A673 (cell line): ENCODE measurements at regions of chr2 and their contacts with region 1.

Region 1: DNA sequence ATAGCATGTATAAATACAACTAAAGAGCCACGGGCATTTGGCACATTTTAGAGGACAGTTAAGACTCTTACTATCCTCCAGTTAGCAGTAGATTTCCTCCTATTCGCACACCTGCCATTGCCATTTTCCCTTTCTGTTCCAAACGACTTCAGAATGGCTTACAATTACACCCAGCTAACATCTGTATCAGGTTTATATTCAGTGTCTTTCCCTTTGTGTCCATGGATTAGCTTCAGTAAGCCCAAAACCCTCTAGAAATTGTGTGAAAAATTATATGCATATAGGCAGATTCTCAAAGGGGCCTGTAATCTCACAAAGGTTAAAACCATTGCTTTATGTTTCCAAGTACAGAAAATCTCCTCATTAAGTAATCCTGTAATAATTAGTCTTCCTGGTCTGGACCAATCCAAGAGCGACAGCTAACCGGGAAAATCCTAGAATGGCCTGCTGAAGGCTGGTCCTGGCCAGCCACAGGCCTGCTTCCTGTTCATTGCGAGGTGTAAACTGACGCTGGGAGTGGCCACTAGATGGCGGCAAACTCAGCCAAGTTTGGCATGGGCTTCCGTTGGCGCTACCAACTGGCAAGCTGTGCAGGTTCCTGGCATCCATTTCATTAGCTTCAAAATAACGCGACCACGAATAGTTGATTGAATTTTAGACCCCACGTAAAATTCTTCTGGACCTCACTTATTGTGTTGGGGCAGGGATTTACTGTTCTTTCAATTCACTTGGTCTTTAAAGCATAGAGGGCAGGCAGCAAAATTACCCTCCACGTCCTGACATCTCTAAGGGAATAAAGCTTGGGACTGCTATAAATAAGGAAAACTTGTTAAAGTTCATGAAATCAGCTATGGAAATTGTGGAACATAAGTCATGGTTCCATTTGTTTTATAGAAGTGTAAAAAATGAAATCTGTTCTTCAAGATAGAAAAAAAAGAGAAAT is 17.1 kb downstream of the ARHGAP25 start:
- DNase-seq: peak; percentile 91
- H3K4me3 ChIP-seq: no peak overlapping the region
- H3K27ac ChIP-seq: no peak overlapping the region
- H3K4me1 ChIP-seq: peaks cover 10% of the 10 kb centered on the region
- H3K27me3 ChIP-seq: no peaks in the 10 kb centered on the region
- CTCF ChIP-seq: peak; percentile 97

Region 2: GRCh38 chr2:68362069-68362468 is 389.6 kb before region 1 on chr2:
- CTCF ChIA-PET with region 1: no interaction called
- POLR2A ChIA-PET with region 1: no interaction called
- intact Hi-C with region 1: no loop called
- DNase-seq: peak; percentile 87
- H3K4me3 ChIP-seq: no peak overlapping the region
- H3K27ac ChIP-seq: no peak overlapping the region
- H3K4me1 ChIP-seq: no peaks in the 10 kb centered on the region
- H3K27me3 ChIP-seq: no peaks in the 10 kb centered on the region
- CTCF ChIP-seq: peak; percentile 86

Region 3: DNA sequence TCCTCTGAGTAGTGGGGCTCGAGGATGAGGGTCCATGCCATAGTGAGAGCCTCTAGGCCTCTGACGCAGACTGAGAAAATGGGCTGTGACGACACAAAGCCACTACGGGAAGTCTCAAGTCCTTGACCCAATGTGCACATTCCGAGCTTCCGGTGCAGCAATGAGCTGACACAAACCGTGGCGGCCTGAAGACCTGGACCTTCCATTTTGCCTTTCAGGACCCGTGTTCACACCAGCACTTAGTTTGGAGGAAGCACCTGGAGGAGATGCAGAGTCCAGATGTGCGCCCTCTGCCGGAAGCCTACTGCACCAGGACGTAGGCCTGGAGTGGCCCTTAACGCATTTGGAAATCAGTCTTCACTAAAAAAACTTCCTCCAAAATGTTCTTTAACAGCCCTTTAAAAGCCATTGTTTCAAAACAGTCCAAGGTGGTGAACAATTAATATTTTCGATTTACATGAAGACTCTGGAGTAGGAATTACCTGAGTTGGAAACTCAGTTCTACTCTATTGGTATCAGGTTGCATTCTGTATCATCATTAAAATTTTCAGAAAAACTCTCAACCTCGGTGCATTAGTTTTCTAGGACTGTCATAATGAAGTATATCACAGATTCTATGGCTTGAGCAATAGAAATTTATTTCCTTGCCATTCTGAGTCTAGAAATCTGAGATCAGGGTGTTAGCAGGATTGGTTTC is 85.6 kb after region 1 on chr2:
- CTCF ChIA-PET with region 1: interaction called, 3 read pairs
- POLR2A ChIA-PET with region 1: no interaction called
- intact Hi-C with region 1: loop called (anchors 2 kb)
- DNase-seq: peak; percentile 58
- H3K4me3 ChIP-seq: no peak overlapping the region
- H3K27ac ChIP-seq: no peak overlapping the region
- H3K4me1 ChIP-seq: no peaks in the 10 kb centered on the region
- H3K27me3 ChIP-seq: no peaks in the 10 kb centered on the region
- CTCF ChIP-seq: peak; percentile 72

Region 4: GRCh38 chr2:68909793-68910674 is 158.4 kb after region 1 on chr2:
- CTCF ChIA-PET with region 1: interaction called, 4 read pairs
- POLR2A ChIA-PET with region 1: no interaction called
- intact Hi-C with region 1: loop called (anchors 2 kb)
- DNase-seq: peak; percentile 88
- H3K4me3 ChIP-seq: no peak overlapping the region
- H3K27ac ChIP-seq: no peak overlapping the region
- H3K4me1 ChIP-seq: peaks cover 19% of the 10 kb centered on the region
- H3K27me3 ChIP-seq: no peaks in the 10 kb centered on the region
- CTCF ChIP-seq: peak; percentile 91

Region 5: DNA sequence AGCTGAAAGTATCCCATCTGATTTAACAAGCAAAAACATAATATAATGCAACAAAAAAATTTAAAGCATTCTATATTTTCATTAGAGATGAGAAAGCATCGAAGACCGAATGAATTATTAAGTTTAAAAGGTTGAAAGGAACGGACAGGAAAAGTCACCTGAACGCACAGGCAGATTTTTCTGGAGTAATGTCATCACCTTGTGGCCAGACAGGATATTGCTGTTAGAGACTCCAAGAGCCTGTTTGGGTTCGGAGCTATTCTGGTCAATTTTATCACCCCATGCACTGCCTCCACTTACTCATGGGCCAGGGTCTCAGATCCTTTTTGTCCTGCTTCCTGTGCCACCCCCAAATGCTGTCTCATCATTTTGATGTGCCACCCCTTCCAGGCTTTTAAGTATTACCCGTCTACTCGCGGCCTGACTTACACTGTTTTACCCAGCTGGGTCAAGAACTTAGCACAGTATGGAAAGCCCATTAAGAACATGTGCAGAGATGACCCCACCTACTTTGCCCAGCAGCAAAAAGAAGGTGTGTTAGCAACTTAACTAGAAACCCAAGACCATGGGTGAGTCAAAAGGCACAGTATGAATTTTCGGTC is 173.7 kb after region 1 on chr2:
- CTCF ChIA-PET with region 1: interaction called, 16 read pairs
- POLR2A ChIA-PET with region 1: no interaction called
- intact Hi-C with region 1: loop called (anchors 1 kb)
- DNase-seq: peak; percentile 62
- H3K4me3 ChIP-seq: no peak overlapping the region
- H3K27ac ChIP-seq: no peak overlapping the region
- H3K4me1 ChIP-seq: no peaks in the 10 kb centered on the region
- H3K27me3 ChIP-seq: no peaks in the 10 kb centered on the region
- CTCF ChIP-seq: peak; percentile 80